ENCODE measurements at regions of chrX and their contacts with region 1.

Region 1: GRCh38 chrX:119118780-119119395 is 8.7 kb downstream of the KIAA1210 start:
- DNase-seq: peak; percentile 50 to 53
- ATAC-seq: peak; percentile 86 to 97; a peak in 5 of 6 replicates
- H3K4me3 ChIP-seq: no peak overlapping the region
- H3K27ac ChIP-seq: no peak overlapping the region
- H3K4me1 ChIP-seq: no peaks in the 10 kb centered on the region
- CTCF ChIP-seq: peak; percentile 59
- EP300 ChIP-seq: no peak
- POLR2A ChIP-seq: no peak
- RAD21 ChIP-seq: peak; percentile 70 to 75

Region 2: GRCh38 chrX:118974088-118974907 is 144.6 kb before region 1 on chrX and contains the start of gene LONRF3:
- CTCF ChIA-PET with region 1: no interaction called
- POLR2A ChIA-PET with region 1: no interaction called
- DNase-seq: peak; percentile 53 to 60
- ATAC-seq: peak; percentile 33 to 62; a peak in 4 of 6 replicates
- H3K4me3 ChIP-seq: peak within 1 kb of the TSS; percentile 76
- H3K27ac ChIP-seq: peak within 1 kb of the TSS; percentile 95 to 98
- H3K4me1 ChIP-seq: peaks cover 28% of the 10 kb centered on the region
- CTCF ChIP-seq: no peak
- EP300 ChIP-seq: no peak
- POLR2A ChIP-seq: peak; percentile 81
- RAD21 ChIP-seq: no peak
- polyA plus RNA-seq, gene LONRF3: 7.7 and 8.1 TPM in 2 replicates

Region 3: DNA sequence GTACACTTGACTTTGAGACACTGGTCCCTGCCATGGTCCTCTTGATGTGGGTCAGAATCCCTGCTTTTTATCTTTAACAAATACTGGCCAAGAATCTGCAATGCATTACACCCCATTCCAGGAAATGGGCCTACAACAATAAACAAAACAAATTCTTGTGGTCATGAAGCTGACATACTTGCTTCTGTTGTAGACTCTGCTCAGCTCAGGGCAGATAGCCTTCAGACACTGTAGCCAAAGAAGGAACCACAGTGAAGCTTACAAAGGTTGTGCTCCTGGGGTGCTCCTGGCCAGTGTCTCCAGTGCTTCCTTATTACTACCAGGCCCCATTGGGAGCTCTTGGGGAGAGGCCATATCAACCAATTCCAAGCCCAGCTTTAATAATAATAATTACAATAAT is 13.1 kb before region 1 on chrX:
- CTCF ChIA-PET with region 1: interaction called, 19 read pairs
- POLR2A ChIA-PET with region 1: no interaction called
- DNase-seq: no peak
- ATAC-seq: no peak
- H3K4me3 ChIP-seq: no peak overlapping the region
- H3K27ac ChIP-seq: no peak overlapping the region
- H3K4me1 ChIP-seq: no peaks in the 10 kb centered on the region
- CTCF ChIP-seq: no peak
- EP300 ChIP-seq: no peak
- POLR2A ChIP-seq: no peak
- RAD21 ChIP-seq: no peak

Region 4: DNA sequence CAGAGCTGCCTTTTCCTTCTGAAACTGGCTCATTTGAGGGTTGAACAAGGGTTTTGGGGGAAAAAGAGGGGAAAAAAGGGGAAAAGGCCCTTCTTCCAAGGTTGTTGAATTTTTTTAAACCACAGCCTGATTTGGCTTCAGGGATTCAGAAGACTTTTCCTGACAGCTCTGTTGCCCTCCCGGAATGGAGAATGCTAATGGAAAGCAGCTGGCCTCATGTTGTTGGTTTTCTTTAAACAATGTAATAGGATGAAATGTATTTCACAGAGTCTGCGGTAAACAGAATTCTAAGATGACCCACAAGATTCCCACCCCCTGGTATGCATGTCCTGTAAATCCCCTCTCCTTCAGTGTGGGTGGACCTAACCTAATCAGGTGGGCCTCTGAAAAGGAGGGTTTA is 12.0 kb after region 1 on chrX:
- CTCF ChIA-PET with region 1: interaction called, 18 read pairs
- POLR2A ChIA-PET with region 1: no interaction called
- DNase-seq: no peak
- ATAC-seq: no peak
- H3K4me3 ChIP-seq: no peak overlapping the region
- H3K27ac ChIP-seq: no peak overlapping the region
- H3K4me1 ChIP-seq: peaks cover 6% of the 10 kb centered on the region; the same call in 2 of the 3 replicates
- CTCF ChIP-seq: no peak
- EP300 ChIP-seq: no peak
- POLR2A ChIP-seq: no peak
- RAD21 ChIP-seq: no peak

Region 5: DNA sequence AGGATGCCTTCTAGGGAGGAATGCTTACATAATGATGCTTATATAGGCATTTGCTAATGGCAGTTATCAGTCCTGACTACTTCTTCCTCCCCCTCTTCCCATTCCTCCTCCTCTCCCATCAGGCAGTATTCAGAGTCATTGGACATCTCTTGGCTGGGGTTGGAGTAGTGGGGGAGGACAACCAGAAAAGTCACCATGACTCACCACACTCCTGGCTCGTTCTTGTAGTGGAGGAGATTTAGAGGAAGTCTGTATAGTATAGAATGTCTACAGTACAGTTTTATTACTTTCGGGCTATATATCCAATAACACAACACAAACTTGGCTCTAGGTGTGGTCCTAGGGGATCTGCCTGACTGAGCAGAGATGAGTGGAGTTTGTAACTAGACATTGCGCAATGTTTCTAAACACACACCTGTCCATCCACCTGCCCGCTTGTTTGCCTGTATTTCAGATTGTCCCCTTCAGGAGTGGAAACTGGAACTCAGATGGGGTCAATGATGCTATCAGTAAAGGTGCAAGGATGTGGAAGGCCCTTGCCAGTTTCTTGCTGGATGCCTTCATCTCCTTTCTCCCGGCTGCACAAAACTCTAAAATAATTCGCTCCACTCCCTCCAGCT is 36.6 kb after region 1 on chrX:
- CTCF ChIA-PET with region 1: no interaction called
- POLR2A ChIA-PET with region 1: no interaction called
- DNase-seq: peak; percentile 18 to 47
- ATAC-seq: peak; percentile 84 to 93; a peak in 5 of 6 replicates
- H3K4me3 ChIP-seq: no peak overlapping the region
- H3K27ac ChIP-seq: peak overlapping the region; percentile 49 to 57; a peak in 5 of 6 replicates
- H3K4me1 ChIP-seq: peaks cover 16% of the 10 kb centered on the region
- CTCF ChIP-seq: no peak
- EP300 ChIP-seq: no peak
- POLR2A ChIP-seq: no peak
- RAD21 ChIP-seq: no peak

Region 6: GRCh38 chrX:119194621-119195020 is 75.7 kb after region 1 on chrX:
- CTCF ChIA-PET with region 1: interaction called, 24 read pairs
- POLR2A ChIA-PET with region 1: no interaction called
- DNase-seq: peak in 1 of 2 experiments; percentile 30
- ATAC-seq: peak in 1 of 2 experiments; percentile 51; a peak in 1 of 6 replicates
- H3K4me3 ChIP-seq: no peak overlapping the region
- H3K27ac ChIP-seq: no peak overlapping the region
- H3K4me1 ChIP-seq: no peaks in the 10 kb centered on the region
- CTCF ChIP-seq: peak; percentile 30
- EP300 ChIP-seq: no peak
- POLR2A ChIP-seq: no peak
- RAD21 ChIP-seq: peak; percentile 20 to 40; a peak in 3 of 5 replicates

Region 7: GRCh38 chrX:119235872-119236622 is 117.2 kb after region 1 on chrX and contains the start of gene PGRMC1:
- CTCF ChIA-PET with region 1: no interaction called
- POLR2A ChIA-PET with region 1: no interaction called
- DNase-seq: peak; percentile 57 to 83
- ATAC-seq: peak; percentile 91 to 95
- H3K4me3 ChIP-seq: peak within 1 kb of the TSS; percentile 96
- H3K27ac ChIP-seq: peak within 1 kb of the TSS; percentile 94 to 96
- H3K4me1 ChIP-seq: peaks cover 36% of the 10 kb centered on the region
- CTCF ChIP-seq: no peak
- EP300 ChIP-seq: no peak
- POLR2A ChIP-seq: peak; percentile 96
- RAD21 ChIP-seq: no peak
- polyA plus RNA-seq, gene PGRMC1: 118 and 163 TPM in 2 replicates

Measured in A549 (cell line).